ENCODE measurements at regions of chr14 and their contacts with region 1.

Region 1: GRCh38 chr14:106802423-106803364 is 1276.3 kb downstream of the TMEM121 start:
- DNase-seq: no peak
- ATAC-seq: no peak
- H3K4me3 ChIP-seq: no peak overlapping the region
- H3K4me3 Mint-ChIP-seq: no peak overlapping the region
- H3K27ac ChIP-seq: no peak overlapping the region
- H3K27ac Mint-ChIP-seq: no peak overlapping the region
- H3K4me1 ChIP-seq: no peaks in the 10 kb centered on the region
- H3K4me1 Mint-ChIP-seq: no peaks in the 10 kb centered on the region
- H3K27me3 ChIP-seq: no peaks in the 10 kb centered on the region
- H3K27me3 Mint-ChIP-seq: peaks cover 45% of the 10 kb centered on the region
- CTCF ChIP-seq: peak; percentile 15

Region 2: GRCh38 chr14:106622200-106622745 is 180.4 kb before region 1 on chr14:
- CTCF ChIA-PET with region 1: no interaction called
- POLR2A ChIA-PET with region 1: no interaction called
- intact Hi-C with region 1: no loop called
- DNase-seq: peak in 7 of 9 experiments; percentile 9 to 72 (median 59)
- ATAC-seq: peak; percentile 50
- H3K4me3 ChIP-seq: no peak overlapping the region
- H3K4me3 Mint-ChIP-seq: no peak overlapping the region
- H3K27ac ChIP-seq: no peak overlapping the region
- H3K27ac Mint-ChIP-seq: no peak overlapping the region
- H3K4me1 ChIP-seq: peaks cover 6% of the 10 kb centered on the region
- H3K4me1 Mint-ChIP-seq: peaks cover 15% of the 10 kb centered on the region
- H3K27me3 ChIP-seq: peaks cover 0 to 2% of the 10 kb centered on the region in 2 experiments
- H3K27me3 Mint-ChIP-seq: peaks cover 26% of the 10 kb centered on the region
- CTCF ChIP-seq: no peak

Region 3: DNA sequence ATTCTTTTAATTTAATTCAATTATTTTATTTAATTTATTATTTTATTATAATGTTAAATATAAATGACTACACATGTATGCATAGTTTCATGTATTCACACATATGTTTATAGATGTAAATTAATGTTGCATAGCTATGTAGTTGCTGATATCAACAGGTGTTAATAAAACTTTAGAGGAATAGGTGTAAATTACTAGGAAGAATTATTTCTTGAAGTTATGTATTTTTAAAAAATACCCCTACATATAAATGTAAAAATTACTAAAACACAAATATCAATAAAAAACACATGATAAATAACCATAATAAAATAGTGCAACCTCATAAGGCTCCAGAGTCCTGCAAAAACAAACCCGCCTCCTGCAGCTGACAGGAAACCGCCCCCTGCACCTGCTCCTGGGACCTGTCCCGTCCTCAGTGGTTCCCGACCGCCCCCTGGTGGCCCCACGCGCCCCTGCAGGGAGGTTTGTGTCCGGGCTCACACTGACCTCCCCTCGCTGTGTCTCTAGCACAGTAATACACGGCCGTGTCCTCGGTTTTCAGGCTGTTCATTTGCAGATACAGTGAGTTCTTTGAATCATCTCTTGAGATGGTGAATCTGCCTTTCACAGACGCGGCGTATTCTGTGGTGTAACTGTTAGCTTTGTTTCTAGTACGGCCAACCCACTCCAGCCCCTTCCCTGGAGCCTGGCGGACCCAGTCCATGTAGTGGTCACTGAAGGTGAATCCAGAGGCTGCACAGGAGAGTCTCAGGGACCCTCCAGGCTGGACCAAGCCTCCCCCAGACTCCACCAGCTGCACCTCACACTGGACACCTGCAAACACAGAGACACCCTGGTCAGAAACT is 12.3 kb before region 1 on chr14:
- CTCF ChIA-PET with region 1: interaction called, 18 read pairs
- POLR2A ChIA-PET with region 1: no interaction called
- intact Hi-C with region 1: no loop called
- DNase-seq: peak; percentile 39 to 83 (median 73)
- ATAC-seq: peak; percentile 80
- H3K4me3 ChIP-seq: no peak overlapping the region
- H3K4me3 Mint-ChIP-seq: no peak overlapping the region
- H3K27ac ChIP-seq: no peak overlapping the region
- H3K27ac Mint-ChIP-seq: no peak overlapping the region
- H3K4me1 ChIP-seq: peaks cover 11% of the 10 kb centered on the region
- H3K4me1 Mint-ChIP-seq: peaks cover 16% of the 10 kb centered on the region
- H3K27me3 ChIP-seq: no peaks in the 10 kb centered on the region
- H3K27me3 Mint-ChIP-seq: peaks cover 8% of the 10 kb centered on the region
- CTCF ChIP-seq: peak; percentile 98

Measured in CD8-positive, alpha-beta T cell (primary cell).